Heart right ventricle (tissue), 16 donors: ENCODE measurements at regions of chr19 and their contacts with region 1.

Region 1: GRCh38 chr19:44988896-44989556 is 12.2 kb upstream of the RELB start:
- DNase-seq: peak; percentile 60 to 65
- ATAC-seq: peak in 6 of 8 donors; percentile 25 to 51 (median 36)
- H3K4me3 ChIP-seq: no peak overlapping the region
- H3K27ac ChIP-seq: no peak overlapping the region
- H3K4me1 ChIP-seq: no peaks in the 10 kb centered on the region
- H3K27me3 ChIP-seq: no peaks in the 10 kb centered on the region
- CTCF ChIP-seq: peak in 7 of 9 donors; percentile 51 to 65 (median 54)

Region 2: DNA sequence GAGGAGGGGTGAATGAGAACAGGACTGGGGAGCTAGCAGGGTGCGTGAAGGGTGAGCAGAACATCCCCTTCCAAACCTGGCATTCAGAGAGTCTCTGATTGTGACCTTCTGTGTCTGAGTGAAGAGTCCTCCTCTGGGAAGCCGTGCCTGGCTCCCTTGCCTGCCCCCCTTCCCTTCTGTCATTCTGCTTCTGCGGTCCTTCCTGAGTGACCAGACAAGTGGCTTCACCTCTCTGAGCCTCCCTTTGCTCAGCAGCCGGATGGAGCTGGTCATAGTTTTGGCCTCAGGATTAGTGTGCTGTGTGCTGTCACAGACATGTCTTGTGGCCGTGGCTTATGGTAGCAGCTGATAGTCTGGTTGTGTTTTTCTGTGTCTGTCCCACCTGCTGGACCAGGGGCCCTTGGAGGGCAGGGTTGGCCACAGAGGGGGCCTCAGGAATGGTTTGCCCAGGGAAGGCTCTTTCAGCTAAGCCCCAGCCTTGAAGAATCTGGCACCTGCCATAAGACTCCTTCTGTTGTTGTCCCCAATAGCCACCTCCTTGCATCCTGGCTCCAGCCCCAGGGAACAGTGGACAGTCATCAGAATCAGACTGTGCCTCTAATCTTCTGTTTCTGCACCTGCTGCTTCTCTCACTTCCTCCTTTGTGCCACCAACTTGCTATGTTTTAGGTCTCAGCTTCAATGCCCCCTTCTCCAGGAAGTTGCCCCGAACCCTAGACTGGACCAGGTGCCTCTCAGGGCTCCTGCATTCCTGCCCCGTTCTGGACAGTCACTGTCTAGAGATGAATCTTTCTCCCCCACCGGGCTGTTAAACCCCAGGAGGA is 27.9 kb before region 1 on chr19:
- intact Hi-C with region 1: no loop called
- DNase-seq: no peak
- ATAC-seq: peak in 3 of 8 donors; percentile 16 to 43 (median 23)
- H3K4me3 ChIP-seq: no peak overlapping the region
- H3K27ac ChIP-seq: no peak overlapping the region
- H3K4me1 ChIP-seq: peaks cover 12 to 56% (median 22%) of the 10 kb centered on the region in 9 donors
- H3K27me3 ChIP-seq: no peaks in the 10 kb centered on the region
- CTCF ChIP-seq: no peak

Region 3: DNA sequence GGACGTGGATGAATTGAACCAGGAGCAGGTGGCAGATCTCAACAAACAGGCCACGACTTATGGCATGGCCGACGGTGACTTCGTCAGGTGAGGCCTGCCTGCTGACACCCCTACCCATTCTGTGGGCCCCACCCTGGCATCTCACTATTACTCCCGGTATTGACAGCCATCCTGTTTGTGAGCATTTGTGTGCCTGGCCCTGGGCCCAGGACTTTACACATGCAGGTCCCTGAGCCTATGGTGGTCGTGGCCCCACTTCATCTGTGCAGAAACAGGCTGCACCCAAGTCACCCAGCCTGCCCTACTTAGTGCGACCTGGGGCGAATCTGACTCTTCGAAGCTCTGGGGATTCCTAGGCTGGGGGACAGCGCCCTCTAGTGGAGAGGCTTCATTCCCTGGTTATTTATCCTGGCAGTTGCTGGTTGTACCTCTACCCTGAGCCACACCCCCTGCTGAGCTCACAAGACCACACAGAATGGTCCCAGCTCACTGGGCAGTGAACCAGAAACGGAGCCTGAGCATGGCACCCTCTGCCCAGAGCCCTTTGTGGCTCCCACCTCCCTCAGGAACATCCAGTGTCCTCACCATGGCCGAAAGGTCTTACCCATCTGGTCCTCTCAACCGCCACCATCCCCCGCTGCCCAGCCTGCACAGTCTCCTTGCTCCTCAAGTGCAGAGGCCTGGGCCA is 70.4 kb after region 1 on chr19:
- intact Hi-C with region 1: loop called in 1 of 10 experiments (anchors 5 kb)
- DNase-seq: peak; percentile 55 to 71
- ATAC-seq: peak in 7 of 8 donors; percentile 59 to 73 (median 67)
- H3K4me3 ChIP-seq: no peak overlapping the region
- H3K27ac ChIP-seq: no peak overlapping the region
- H3K4me1 ChIP-seq: no peaks in the 10 kb centered on the region
- H3K27me3 ChIP-seq: no peaks in the 10 kb centered on the region
- CTCF ChIP-seq: peak; percentile 75 to 88 (median 84)

Region 4: DNA sequence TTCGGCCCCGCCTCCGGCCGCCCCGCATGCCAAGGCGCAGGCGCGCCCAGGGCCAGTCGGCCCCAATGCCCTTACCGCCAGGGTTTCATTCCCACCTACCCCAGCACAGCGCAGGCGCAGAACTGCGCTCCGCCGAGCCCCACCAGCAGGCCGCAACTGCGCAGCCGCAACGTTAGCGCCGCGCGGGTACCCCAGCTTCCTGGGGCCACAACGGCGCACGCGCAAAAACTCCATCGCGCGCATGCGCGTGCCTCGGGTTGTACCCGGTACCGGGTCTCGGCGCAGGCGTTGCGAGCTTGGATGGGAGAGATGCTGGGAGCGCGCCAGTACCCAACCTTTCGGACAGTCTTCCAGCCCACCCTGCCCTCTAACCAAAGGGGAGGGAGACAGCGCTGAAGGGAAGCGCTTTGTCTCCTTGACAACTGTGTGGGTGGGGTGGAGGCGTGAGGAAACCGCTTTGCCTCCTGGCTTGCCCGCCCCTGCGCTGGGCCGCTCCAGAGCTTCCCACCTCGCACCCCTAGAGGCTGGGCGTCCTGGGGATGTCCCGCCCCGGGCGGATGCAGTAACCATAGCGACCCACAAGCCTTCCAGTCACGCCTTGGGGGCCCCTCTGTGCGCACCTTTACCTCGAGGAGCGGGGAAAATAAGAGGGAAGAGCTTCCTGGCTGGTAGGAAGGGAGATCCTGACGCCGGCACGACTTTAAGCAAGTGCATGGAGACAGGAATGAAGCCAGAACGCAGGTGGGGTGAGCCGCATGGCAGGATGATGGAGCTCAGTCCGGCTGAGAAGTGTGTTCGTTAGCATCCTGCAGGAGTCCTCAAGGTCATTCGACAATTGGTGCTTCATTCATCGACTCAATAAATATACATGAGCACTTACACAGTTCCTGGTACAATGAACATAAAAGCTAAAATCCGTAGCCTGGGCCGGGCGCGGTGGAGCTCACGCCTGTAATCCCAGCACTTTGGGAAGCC is 913.9 kb after region 1 on chr19:
- intact Hi-C with region 1: loop called in 1 of 10 experiments (anchors 5 kb)
- DNase-seq: peak; percentile 97 to 100
- ATAC-seq: peak; percentile 95 to 98 (median 96)
- H3K4me3 ChIP-seq: peak overlapping the region; percentile 58 to 87 (median 78)
- H3K27ac ChIP-seq: peak overlapping the region in 9 of 10 donors; percentile 78 to 88 (median 83)
- H3K4me1 ChIP-seq: peaks cover 0 to 20% (median 18%) of the 10 kb centered on the region in 9 donors
- H3K27me3 ChIP-seq: no peaks in the 10 kb centered on the region
- CTCF ChIP-seq: no peak